ENCODE measurements at regions of chr9 and their contacts with region 1.

Region 1: GRCh38 chr9:72871685-72872084 is 81.2 kb downstream of the ALDH1A1 start:
- DNase-seq: peak; percentile 43
- H3K4me3 Mint-ChIP-seq: no peak overlapping the region
- H3K27ac Mint-ChIP-seq: no peak overlapping the region
- H3K4me1 Mint-ChIP-seq: no peaks in the 10 kb centered on the region
- H3K27me3 Mint-ChIP-seq: peaks cover 22% of the 10 kb centered on the region
- CTCF ChIP-seq: peak; percentile 61

Region 2: DNA sequence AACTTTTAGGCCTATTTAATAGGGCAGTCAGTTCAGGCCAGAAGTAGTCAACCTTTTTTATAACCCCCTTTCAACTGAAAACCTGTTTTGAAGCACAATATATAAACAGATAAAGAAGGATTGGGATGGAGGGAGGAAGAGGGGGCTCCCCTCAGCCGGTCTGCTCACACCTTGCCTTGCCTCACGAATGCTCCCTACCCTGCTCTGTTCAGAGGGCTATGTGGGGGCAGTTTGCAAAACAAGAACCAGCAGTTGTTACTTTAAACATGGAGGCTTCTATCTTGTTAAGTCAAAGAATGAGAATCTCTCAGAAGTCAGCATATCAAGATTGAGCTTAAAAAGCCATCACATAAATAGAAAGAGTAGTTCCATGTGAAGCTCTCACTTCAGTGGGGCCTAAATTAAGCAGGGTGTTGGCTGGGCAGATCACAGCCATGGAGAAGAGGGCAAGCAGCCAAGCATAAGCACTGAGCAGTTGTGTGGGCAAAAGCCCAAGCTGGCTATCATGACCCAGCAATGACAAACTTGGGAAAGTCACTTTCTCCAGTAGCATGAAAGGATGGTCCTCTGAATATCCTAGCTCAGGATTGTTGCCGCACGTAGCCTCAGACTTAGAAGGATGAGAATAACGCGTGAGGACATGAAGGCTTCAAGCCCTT is 10.6 kb after region 1 on chr9:
- CTCF ChIA-PET with region 1: interaction called, 11 read pairs
- POLR2A ChIA-PET with region 1: no interaction called
- intact Hi-C with region 1: no loop called
- DNase-seq: no peak
- H3K4me3 Mint-ChIP-seq: no peak overlapping the region
- H3K27ac Mint-ChIP-seq: no peak overlapping the region
- H3K4me1 Mint-ChIP-seq: peaks cover 10% of the 10 kb centered on the region
- H3K27me3 Mint-ChIP-seq: no peaks in the 10 kb centered on the region
- CTCF ChIP-seq: no peak

Region 3: DNA sequence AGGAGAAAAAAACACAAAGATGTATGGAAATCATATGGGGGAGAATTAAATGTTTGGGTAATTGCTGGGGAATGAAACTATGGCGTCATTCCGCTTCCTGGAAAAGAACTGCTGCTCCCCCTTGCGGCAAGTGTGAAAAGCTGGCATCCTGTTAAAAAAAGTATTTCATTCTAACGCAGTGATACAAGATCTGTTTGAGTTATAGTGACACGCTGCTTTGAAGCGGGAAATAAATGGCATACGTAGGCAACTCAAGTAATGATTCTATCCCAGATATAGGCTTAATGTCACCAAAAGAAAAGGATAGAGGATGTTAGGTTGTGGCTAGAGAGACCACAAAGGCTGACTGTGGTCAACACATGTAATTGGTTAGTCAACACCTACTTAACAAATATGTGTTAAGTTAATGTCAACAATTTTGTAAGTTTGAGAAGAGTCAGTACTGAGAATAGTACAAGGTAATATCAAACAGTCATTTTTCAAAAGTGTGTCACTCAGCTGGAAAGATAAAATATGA is 151.4 kb after region 1 on chr9:
- CTCF ChIA-PET with region 1: interaction called, 67 read pairs
- POLR2A ChIA-PET with region 1: no interaction called
- intact Hi-C with region 1: loop called (anchors 1 kb)
- DNase-seq: peak; percentile 81
- H3K4me3 Mint-ChIP-seq: no peak overlapping the region
- H3K27ac Mint-ChIP-seq: no peak overlapping the region
- H3K4me1 Mint-ChIP-seq: no peaks in the 10 kb centered on the region
- H3K27me3 Mint-ChIP-seq: peaks cover 72% of the 10 kb centered on the region
- CTCF ChIP-seq: peak; percentile 78

Region 4: GRCh38 chr9:73081979-73082657 is 210.4 kb after region 1 on chr9:
- CTCF ChIA-PET with region 1: interaction called, 17 read pairs
- POLR2A ChIA-PET with region 1: no interaction called
- intact Hi-C with region 1: loop called (anchors 1 kb)
- DNase-seq: peak; percentile 53
- H3K4me3 Mint-ChIP-seq: no peak overlapping the region
- H3K27ac Mint-ChIP-seq: no peak overlapping the region
- H3K4me1 Mint-ChIP-seq: no peaks in the 10 kb centered on the region
- H3K27me3 Mint-ChIP-seq: peaks cover 71% of the 10 kb centered on the region
- CTCF ChIP-seq: peak; percentile 54

Measured in MCF 10A (cell line).